ENCODE measurements at regions of chr1 and their contacts with region 1.

Region 1: GRCh38 chr1:12477936-12478611 is 139.9 kb downstream of the DHRS3 start:
- DNase-seq: peak; percentile 82 to 95 (median 92)
- ATAC-seq: peak; percentile 86
- H3K4me3 ChIP-seq: no peak overlapping the region
- H3K27ac ChIP-seq: peak overlapping the region; percentile 90
- H3K4me1 ChIP-seq: peaks cover 49% of the 10 kb centered on the region
- H3K27me3 ChIP-seq: no peaks in the 10 kb centered on the region

Region 2: DNA sequence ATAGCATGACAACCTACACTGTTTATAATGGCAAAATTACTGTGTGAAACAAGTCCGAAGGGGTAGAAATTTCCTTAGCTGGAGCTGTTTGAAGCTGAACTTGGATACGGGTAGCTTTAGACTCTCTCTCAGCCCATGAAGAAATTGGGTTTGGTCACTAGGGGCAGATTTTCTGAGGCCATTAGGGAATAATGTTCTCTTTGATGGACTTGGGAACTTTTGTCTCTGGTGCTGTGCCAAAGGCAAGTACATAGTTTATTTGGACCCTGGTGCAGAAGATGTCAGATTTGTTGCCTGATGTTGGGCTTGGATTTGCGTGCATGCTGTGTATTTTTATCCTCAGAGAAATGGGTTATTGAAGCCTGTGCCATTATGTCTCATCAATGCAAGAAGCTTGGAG is 138.7 kb before region 1 on chr1:
- intact Hi-C with region 1: loop called in 1 of 4 experiments (anchors 10 kb)
- DNase-seq: no peak
- ATAC-seq: peak; percentile 8 to 22
- H3K4me3 ChIP-seq: no peak overlapping the region
- H3K27ac ChIP-seq: peak overlapping the region; percentile 60
- H3K4me1 ChIP-seq: peaks cover 15% of the 10 kb centered on the region
- H3K27me3 ChIP-seq: no peaks in the 10 kb centered on the region

Region 3: GRCh38 chr1:12528021-12528852 is 50.2 kb after region 1 on chr1:
- intact Hi-C with region 1: loop called in 1 of 4 experiments (anchors 5 kb)
- DNase-seq: peak; percentile 85 to 95 (median 88)
- ATAC-seq: peak; percentile 52 to 60
- H3K4me3 ChIP-seq: no peak overlapping the region
- H3K27ac ChIP-seq: no peak overlapping the region
- H3K4me1 ChIP-seq: peaks cover 5% of the 10 kb centered on the region
- H3K27me3 ChIP-seq: no peaks in the 10 kb centered on the region

Region 4: DNA sequence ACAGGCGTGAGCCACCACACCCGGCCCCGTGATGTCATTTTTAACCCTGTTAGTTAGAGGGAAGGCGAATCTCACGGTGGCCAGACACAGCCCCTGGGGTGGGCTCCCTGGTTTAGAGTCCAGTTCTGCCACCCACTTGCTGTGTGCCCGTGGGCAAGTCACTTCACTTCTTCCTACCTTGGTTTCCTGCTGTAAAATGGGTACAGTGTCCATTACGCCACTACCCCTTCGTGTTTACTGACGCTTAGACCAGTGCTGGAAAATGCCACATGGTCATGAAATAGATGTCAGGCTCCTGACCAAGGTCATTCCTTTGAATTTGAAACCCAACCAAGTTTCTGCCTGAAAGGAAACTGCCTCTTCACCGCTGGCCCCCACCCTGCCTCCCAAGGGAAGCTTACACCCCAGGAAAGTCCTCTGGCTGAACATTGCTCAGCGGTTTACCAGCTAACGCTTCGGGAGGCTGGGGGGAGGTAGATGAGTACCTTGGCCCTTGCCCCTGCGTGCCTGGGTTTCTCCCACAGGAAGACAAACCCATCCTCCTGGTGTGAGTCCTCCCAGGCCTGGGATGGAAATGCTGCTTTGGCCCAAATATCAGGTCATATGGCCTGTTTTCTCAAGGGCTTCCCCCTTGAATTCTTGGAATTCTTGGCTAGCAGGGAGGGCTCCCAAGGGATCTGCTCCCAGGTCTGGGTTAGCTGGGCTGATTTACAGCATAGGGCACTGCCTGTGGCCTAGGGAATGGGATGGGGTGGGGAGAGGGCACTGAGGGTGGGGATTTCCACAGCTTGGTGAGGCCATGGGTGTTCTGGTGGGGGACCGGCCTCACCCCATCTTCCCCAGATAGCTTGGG is 158.2 kb after region 1 on chr1:
- intact Hi-C with region 1: no loop called
- DNase-seq: peak; percentile 66 to 79 (median 75)
- ATAC-seq: peak; percentile 77 to 93
- H3K4me3 ChIP-seq: no peak overlapping the region
- H3K27ac ChIP-seq: peak overlapping the region; percentile 88
- H3K4me1 ChIP-seq: peaks cover 4% of the 10 kb centered on the region
- H3K27me3 ChIP-seq: no peaks in the 10 kb centered on the region

Region 5: GRCh38 chr1:13478692-13479091 is 1000.6 kb after region 1 on chr1:
- intact Hi-C with region 1: no loop called
- DNase-seq: no peak
- ATAC-seq: no peak
- H3K4me3 ChIP-seq: no peak overlapping the region
- H3K27ac ChIP-seq: no peak overlapping the region
- H3K4me1 ChIP-seq: no peaks in the 10 kb centered on the region
- H3K27me3 ChIP-seq: no peaks in the 10 kb centered on the region